Transverse colon (tissue), 4 donors: ENCODE measurements at regions of chr9 and their contacts with region 1.

Region 1: GRCh38 chr9:70587201-70587600 is 172.7 kb upstream of the KLF9 start:
- DNase-seq: no peak
- H3K4me3 ChIP-seq: no peak overlapping the region
- H3K27ac ChIP-seq: peak overlapping the region; percentile 74 to 84 (median 82)
- H3K4me1 ChIP-seq: peaks cover 14 to 27% (median 17%) of the 10 kb centered on the region in 4 donors
- H3K27me3 ChIP-seq: no peaks in the 10 kb centered on the region
- CTCF ChIP-seq: no peak
- EP300 ChIP-seq: no peak
- POLR2A ChIP-seq: no peak

Region 2: DNA sequence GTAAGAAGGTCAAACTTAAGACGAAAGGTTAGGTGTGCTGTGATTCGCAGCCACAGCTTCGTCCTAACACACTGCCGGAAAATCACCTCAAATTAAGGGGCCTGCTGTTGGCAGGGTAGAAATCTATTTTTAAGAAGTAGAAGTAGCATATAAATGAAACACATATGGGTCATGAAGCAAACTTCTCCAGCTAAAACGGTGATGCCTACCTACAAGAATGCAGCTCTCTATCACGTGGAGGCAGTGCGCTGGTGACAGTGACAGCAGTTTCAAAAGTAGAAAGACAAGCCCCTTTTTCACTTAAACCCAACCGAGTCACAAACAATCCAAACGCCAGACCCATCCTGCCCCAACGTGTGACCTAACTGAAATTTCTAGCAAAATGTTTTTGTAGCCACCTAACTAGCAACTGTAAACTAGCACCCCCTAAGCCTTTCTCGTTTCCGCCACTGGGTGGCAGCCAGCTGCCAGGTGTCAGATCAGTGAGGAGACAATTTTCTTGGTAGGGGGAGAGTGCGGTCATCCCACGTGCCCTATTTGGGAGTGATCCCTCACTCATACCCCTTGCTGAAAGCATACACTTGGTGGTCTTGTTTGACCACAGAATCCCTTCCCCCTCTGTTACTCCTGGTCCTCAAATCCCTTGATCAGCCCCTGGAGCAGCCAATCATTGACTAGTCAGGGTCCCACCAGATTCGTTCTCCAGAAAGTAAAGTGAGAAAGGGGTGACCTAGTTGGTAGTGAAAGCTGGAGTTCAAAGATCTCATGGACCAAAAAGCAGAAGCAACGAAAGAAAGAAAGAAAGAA is 615.4 kb before region 1 on chr9:
- in situ Hi-C with region 1: loop called in 1 of 4 experiments (anchors 25 kb)
- intact Hi-C with region 1: no loop called
- DNase-seq: peak; percentile 67
- H3K4me3 ChIP-seq: no peak overlapping the region
- H3K27ac ChIP-seq: no peak overlapping the region
- H3K4me1 ChIP-seq: no peaks in the 10 kb centered on the region
- H3K27me3 ChIP-seq: no peaks in the 10 kb centered on the region
- CTCF ChIP-seq: peak; percentile 73 to 90 (median 82)
- EP300 ChIP-seq: no peak
- POLR2A ChIP-seq: no peak

Region 3: GRCh38 chr9:70406434-70406862 is 180.8 kb before region 1 on chr9:
- in situ Hi-C with region 1: loop called in 1 of 4 experiments (anchors 10 kb)
- intact Hi-C with region 1: no loop called
- DNase-seq: peak; percentile 33
- H3K4me3 ChIP-seq: peak overlapping the region in 1 of 4 donors; percentile 24
- H3K27ac ChIP-seq: peak overlapping the region; percentile 81 to 86 (median 82)
- H3K4me1 ChIP-seq: peaks cover 44 to 92% (median 85%) of the 10 kb centered on the region in 4 donors
- H3K27me3 ChIP-seq: no peaks in the 10 kb centered on the region
- CTCF ChIP-seq: no peak
- EP300 ChIP-seq: no peak
- POLR2A ChIP-seq: no peak

Region 4: DNA sequence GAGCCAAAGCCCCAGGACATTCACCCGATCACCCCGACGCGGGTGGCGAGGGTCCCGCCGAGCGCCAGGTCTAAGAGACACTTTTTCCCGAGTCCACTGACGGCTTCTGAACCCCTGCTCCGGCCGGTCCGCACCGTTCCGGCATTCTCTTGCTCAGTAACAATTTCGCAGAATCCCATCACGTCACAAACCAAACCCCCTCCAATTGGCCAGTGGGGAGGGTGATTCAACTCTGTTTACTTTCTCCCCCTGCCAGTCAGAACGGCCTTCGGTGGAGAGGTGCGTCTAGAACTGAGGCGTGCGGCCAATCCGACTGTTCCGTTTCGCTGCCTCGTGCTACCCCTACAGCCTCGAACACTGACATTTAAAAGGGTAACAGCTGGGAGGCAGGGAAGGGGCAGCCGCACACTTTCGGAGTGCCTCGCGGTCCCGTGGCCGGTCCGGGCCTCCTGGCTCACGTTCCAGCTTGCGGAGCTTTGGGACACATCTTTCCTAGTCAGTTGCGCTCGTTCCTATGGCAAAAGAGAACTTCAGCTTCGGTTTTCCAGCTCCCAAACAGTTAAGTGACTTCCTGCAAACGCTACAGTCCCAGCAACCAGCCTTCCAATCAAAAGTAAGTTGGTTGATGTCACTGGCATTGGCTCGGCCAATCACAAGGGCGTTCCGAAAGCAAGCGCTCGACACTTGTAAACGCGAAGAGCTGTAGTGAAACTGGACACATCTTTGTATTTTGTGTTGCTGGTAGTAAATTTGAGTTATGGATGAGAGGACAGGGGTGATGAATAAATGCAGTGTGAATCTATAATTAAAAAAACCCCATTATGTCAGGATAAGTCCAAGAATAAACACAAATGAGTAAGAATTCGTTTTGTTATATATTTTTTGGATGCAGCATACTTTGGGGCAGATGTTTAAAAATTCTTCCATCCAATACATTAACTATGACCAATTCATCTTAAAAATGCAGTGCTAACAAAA is 173.1 kb before region 1 on chr9 and contains the start of gene KLF9:
- in situ Hi-C with region 1: loop called in 1 of 4 experiments (anchors 10 kb)
- intact Hi-C with region 1: loop called (anchors 5 kb)
- DNase-seq: peak; percentile 95
- H3K4me3 ChIP-seq: peak within 1 kb of the TSS; percentile 89 to 96 (median 92)
- H3K27ac ChIP-seq: peak within 1 kb of the TSS; percentile 99 to 100 (median 100)
- H3K4me1 ChIP-seq: peaks cover 21 to 59% (median 44%) of the 10 kb centered on the region in 4 donors
- H3K27me3 ChIP-seq: no peaks in the 10 kb centered on the region
- CTCF ChIP-seq: peak in 1 of 5 experiments; percentile 4
- EP300 ChIP-seq: peak; percentile 91
- POLR2A ChIP-seq: peak; percentile 99
- total RNA-seq, gene KLF9: 60.3 to 111 (median 82.9) TPM

Region 5: DNA sequence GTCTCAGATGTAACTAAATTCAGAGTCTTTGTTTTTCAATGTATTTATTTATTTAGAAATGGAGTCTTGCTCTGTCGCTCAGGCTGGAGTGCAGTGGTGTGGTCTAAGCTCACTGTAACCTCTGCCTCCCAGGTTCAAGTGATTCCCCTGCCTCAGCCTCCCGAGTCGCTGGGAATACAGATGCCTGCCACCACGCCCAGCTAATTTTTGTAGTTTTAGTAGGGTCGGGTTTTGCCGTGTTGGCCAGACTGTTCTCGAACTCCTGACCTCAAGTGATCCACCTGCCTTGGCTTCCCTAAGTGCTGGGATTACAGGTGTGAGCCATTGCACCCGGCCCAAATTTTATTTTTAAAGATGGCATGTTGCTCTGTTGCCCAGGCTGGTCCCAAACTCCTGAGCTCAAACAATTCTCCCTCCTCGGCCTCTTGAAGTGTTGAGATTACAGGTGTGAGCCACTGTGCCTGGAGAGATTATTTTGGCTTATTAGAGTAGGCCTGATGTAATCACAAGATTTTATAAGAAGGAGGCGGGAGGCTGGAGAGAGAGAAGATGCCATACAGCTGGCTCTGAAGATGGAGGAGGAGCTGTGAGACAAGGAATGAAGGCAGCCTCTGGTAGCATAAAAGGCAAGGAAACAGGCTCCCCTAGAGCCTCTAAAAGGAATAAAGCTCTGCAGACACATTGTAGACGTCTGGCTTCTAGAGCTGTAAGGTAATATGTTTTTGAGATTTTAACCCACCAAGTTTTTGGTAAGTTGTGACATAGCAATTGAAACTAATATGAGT is 159.8 kb before region 1 on chr9:
- in situ Hi-C with region 1: no loop called
- intact Hi-C with region 1: no loop called
- DNase-seq: no peak
- H3K4me3 ChIP-seq: no peak overlapping the region
- H3K27ac ChIP-seq: peak overlapping the region; percentile 15 to 56 (median 38)
- H3K4me1 ChIP-seq: peaks cover 0 to 15% (median 4%) of the 10 kb centered on the region in 4 donors
- H3K27me3 ChIP-seq: no peaks in the 10 kb centered on the region
- CTCF ChIP-seq: peak in 1 of 5 experiments; percentile 27
- EP300 ChIP-seq: no peak
- POLR2A ChIP-seq: no peak

Region 6: GRCh38 chr9:70679845-70680244 is 92.6 kb after region 1 on chr9:
- in situ Hi-C with region 1: loop called in 1 of 4 experiments (anchors 25 kb)
- intact Hi-C with region 1: no loop called
- DNase-seq: no peak
- H3K4me3 ChIP-seq: no peak overlapping the region
- H3K27ac ChIP-seq: no peak overlapping the region
- H3K4me1 ChIP-seq: no peaks in the 10 kb centered on the region
- H3K27me3 ChIP-seq: no peaks in the 10 kb centered on the region
- CTCF ChIP-seq: no peak
- EP300 ChIP-seq: no peak
- POLR2A ChIP-seq: no peak